ENCODE measurements at regions of chr7 and their contacts with region 1.

Region 1: GRCh38 chr7:18538554-18539250 is 43.2 kb downstream of the HDAC9 start:
- DNase-seq: no peak
- H3K4me3 Mint-ChIP-seq: no peak overlapping the region
- H3K27ac Mint-ChIP-seq: peak overlapping the region; percentile 68
- H3K4me1 Mint-ChIP-seq: peaks cover 4% of the 10 kb centered on the region
- H3K27me3 Mint-ChIP-seq: no peaks in the 10 kb centered on the region

Region 2: DNA sequence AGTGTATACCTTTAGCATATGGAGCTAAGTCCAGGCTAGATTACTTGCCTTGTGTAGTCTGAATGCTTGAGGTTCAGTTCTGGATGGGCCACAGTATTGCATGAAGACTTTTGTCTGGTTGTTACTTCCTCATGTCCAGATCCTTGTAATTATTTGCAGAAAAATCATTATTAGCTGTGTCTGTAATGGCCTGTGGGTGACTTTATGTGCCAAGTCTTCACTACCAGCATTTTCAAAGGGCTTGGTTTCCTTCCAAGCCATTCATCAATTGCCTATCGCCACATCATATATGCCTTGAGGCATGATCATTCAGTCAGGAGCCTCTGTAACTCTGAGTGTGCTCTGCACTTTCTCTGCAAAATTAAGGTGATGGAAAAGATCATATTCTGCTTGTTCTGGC is 56.9 kb before region 1 on chr7:
- intact Hi-C with region 1: no loop called
- DNase-seq: no peak
- H3K4me3 Mint-ChIP-seq: no peak overlapping the region
- H3K27ac Mint-ChIP-seq: no peak overlapping the region
- H3K4me1 Mint-ChIP-seq: no peaks in the 10 kb centered on the region
- H3K27me3 Mint-ChIP-seq: no peaks in the 10 kb centered on the region

Region 3: GRCh38 chr7:18495412-18496340 is 43.0 kb before region 1 on chr7 and contains the start of gene HDAC9:
- intact Hi-C with region 1: loop called (anchors 1 kb)
- DNase-seq: no peak
- H3K4me3 Mint-ChIP-seq: peak within 1 kb of the TSS; percentile 73
- H3K27ac Mint-ChIP-seq: peak within 1 kb of the TSS; percentile 84
- H3K4me1 Mint-ChIP-seq: peaks cover 17% of the 10 kb centered on the region
- H3K27me3 Mint-ChIP-seq: peaks cover 1% of the 10 kb centered on the region
- total RNA-seq, gene HDAC9: 2.9 and 3.0 TPM in 2 replicates

Region 4: DNA sequence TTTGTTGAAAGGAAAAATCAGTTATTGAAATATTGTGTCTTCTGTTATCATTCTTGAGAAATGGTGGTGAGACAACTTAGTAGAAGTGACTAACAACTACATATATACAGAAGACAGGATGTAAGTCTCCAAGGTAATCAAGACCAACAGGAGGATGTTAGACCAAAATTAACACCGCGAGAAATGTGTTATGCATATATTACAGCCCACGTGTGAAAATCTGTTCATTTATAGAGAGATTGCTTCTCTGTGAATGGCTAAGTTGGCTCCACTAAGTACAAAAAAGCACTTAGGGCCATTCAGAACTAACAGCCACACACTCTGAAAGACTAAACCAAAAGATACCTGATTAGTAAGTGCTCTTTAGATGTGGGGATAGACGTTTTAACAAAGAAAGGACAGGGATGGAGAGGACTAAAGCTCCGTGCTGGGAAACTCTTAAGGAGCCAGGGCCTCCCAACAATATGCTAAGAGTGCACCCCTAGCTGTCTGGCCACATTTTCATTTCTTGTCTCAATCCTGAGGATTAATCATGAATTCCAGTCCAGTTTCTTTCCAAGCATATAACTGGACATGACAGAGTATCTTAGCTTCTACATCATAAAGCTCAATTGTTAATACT is 16.6 kb before region 1 on chr7:
- intact Hi-C with region 1: loop called (anchors 1 kb)
- DNase-seq: no peak
- H3K4me3 Mint-ChIP-seq: no peak overlapping the region
- H3K27ac Mint-ChIP-seq: peak overlapping the region; percentile 17
- H3K4me1 Mint-ChIP-seq: no peaks in the 10 kb centered on the region
- H3K27me3 Mint-ChIP-seq: no peaks in the 10 kb centered on the region

Region 5: DNA sequence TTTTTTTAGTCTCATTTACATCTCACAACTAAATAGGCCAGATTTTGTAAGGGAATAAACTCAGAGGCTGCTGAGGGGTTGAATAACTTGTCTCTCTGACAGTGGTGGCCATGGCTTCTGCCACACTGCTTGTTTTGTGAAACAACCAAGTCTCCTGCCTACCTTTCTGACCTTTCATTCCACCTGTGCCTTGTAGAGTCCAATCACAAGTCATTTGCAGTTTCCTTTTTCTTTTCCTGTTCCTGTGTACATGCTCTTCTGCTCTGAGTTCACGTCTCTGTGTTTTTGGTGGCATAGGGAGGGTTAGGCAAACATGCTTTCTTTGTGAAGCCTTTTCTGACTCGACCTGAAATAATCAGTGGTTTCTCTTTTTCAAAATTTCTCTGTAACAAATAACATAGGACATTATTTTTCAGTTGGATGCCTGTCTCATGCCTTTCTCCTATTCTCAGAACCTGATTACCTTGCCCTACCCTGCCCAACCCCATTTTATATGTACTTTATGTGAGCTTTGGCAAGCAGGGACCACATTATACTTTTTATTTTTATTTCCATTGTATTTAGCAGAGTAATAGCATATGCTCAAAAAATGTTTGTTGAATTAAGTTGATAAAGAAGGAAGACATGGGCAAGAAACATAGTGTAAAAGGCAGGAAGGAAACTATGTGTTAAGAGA is 38.5 kb after region 1 on chr7:
- intact Hi-C with region 1: loop called (anchors 5 kb)
- DNase-seq: no peak
- H3K4me3 Mint-ChIP-seq: no peak overlapping the region
- H3K27ac Mint-ChIP-seq: no peak overlapping the region
- H3K4me1 Mint-ChIP-seq: peaks cover 3% of the 10 kb centered on the region
- H3K27me3 Mint-ChIP-seq: no peaks in the 10 kb centered on the region

Measured in activated CD4-positive, alpha-beta T cell treated with anti-CD3 and anti-CD28 coated beads, Interleukin-2, amount 10 ng/mL, durations not matched to agents 24 days and 14 days (primary cell).